ENCODE measurements at regions of chr7 and their contacts with region 1.

Region 1: GRCh38 chr7:47818796-47819606 is 129.3 kb downstream of the PKD1L1 start:
- DNase-seq: no peak

Region 2: DNA sequence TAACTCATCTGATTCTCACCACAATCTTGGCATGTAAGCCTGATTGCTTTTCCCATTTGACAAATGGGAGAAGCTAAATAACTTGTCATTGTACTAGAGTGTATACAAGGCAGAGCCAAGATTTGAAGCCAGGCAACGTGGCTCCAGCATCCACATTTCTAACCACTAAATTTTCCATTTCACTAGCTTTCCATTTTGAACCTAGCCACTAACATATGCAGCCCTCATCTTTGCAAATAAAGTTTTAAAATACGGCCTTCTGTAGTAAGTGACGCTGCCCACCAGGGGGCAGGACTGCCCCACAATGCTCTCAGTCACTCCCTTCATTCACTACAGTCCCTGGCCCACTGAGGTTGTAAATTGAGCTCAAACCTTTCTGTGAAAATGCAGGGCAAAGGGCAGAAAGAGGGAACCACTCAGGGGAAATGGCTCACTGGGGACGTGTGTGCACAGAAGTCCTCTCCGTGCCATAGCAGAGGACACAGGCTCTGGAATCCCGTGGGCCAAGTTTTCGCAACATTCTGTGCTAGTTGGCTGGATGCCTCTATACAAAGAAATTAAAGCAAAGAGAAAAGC is 552.8 kb before region 1 on chr7:
- intact Hi-C with region 1: loop called (anchors 2 to 10 kb)
- DNase-seq: peak; percentile 78

Region 3: DNA sequence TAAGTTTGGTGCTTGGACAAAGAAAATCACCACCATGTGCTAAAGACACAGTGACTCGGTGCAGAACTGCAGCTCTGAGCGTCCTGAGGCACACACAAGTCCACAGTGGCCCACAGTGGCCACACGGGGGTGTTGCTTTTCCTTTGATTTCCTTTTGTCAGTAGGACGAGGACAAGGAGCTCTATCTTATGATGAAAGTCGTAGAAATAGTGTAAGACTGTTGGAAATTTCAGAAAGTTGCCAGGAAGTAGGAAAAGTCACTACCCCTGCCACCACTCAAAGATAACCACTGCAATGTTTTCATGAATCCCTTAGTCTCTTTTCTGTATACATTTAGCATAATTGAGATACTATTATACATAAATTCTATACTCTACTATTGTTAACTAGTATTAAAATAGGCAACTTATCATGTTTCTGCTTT is 383.1 kb before region 1 on chr7:
- intact Hi-C with region 1: loop called (anchors 5 to 10 kb)
- DNase-seq: peak; percentile 91

Region 4: DNA sequence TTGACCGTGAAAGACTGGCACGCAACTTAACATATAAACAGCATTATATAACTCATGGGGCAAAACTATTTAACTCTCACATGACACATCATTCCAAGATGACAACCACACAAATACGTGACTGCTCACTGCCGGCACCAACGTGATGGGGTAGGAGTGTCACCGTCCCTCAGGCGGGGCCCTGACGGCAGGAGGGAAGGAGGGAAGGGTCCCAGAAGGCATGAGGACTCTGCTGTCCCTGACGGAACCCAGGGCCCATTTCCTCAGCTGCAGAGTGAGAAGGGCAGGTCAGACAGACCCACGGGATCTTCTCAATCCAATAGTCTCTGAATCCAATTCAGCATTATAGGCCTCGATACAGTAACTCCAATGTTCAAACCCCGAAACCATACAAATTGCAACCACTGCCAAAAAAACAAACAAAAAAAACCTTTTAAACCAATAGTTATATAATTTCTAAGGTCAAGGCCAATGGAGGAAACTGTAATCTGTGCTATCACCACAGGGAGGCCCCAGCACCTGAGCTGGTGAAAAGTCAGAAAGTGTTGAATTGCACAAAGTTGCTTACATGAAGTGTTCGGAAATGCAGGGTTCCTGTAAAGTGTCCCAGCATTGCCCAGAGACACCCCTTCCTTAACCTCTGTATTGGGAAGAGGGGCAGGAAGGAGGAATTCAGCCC is 374.5 kb before region 1 on chr7:
- intact Hi-C with region 1: loop called (anchors 5 to 10 kb)
- DNase-seq: no peak